ENCODE measurements at regions of chr13 and their contacts with region 1.

Region 1: DNA sequence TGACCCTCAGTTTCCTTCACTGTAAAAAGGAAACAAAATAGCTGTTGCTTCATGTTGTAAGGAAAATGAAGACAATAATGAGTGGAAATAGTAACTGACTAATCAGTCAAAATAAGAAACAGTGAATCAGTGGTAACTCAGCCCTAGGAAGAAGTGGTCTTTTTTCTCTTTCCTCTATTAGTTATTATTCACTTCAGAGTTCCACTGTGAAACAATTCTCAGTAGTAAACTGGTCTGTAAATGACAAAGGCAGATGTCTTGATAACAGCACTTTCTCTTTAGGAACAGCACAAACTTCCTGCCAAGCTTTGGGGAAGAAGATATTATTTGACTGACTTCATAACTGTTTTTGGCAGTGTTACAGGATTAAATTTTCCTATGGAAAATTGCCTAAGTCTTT is 600.5 kb upstream of the KLHL1 start:
- DNase-seq: peak; percentile 93
- H3K4me3 ChIP-seq: peak overlapping the region in 1 of 3 experiments; percentile 11
- H3K27ac ChIP-seq: peak overlapping the region; percentile 53
- H3K4me1 ChIP-seq: peaks cover 28% of the 10 kb centered on the region
- H3K27me3 ChIP-seq: no peaks in the 10 kb centered on the region
- CTCF ChIP-seq: no peak
- POLR2A ChIP-seq: no peak

Region 2: DNA sequence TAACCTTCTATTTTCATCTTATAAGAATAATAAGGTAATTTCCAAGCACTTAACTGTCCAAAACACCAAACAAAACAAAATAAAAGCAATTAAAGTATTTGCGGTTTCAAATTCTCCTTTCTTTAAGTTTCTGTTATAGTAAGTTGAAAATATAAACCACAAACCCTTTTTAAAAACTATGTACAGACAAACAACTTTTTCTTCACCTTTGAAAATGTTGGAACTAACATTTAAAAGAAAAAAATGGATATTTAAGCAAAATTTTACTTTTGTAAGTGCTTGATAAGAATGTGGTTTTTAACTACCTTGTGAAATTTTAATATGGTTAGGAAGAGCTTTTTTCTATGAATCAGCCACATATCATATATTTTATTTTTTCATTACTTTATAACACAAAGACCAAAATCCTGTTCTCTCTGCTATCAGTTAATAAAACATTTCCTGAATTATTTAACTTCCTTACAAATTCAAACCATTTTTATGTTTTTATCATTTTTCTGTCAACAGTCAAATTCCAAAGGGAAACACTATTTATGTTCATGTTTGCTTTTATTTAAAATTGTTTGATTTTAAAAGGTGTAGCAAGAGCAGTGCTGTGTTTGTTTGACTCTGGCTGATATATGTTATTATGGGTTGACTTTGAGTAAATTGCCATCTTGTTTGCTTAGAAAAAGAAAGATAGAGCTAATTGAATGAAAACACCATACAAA is 46.4 kb before region 1 on chr13:
- CTCF ChIA-PET with region 1: interaction called, 3 read pairs
- POLR2A ChIA-PET with region 1: no interaction called
- dilution Hi-C with region 1: no loop called
- intact Hi-C with region 1: loop called (anchors 2 kb)
- DNase-seq: peak; percentile 68
- H3K4me3 ChIP-seq: no peak overlapping the region
- H3K27ac ChIP-seq: no peak overlapping the region
- H3K4me1 ChIP-seq: peaks cover 3% of the 10 kb centered on the region
- H3K27me3 ChIP-seq: no peaks in the 10 kb centered on the region
- CTCF ChIP-seq: no peak
- POLR2A ChIP-seq: no peak

Measured in endothelial cell of umbilical vein (primary cell).